Activated B cell treated with CpG ODN at 0.5 μM for 24 hours (primary cell): ENCODE measurements at regions of chr15 and their contacts with region 1.

Region 1: GRCh38 chr15:77959432-77959879 is 118.1 kb downstream of the TBC1D2B start:
- DNase-seq: peak; percentile 69
- ATAC-seq: peak; percentile 99
- H3K4me3 Mint-ChIP-seq: peak overlapping the region; percentile 44
- H3K27ac Mint-ChIP-seq: no peak overlapping the region
- H3K4me1 Mint-ChIP-seq: peaks cover 7% of the 10 kb centered on the region
- H3K27me3 Mint-ChIP-seq: peaks cover 23% of the 10 kb centered on the region
- CTCF ChIP-seq: peak; percentile 93

Region 2: DNA sequence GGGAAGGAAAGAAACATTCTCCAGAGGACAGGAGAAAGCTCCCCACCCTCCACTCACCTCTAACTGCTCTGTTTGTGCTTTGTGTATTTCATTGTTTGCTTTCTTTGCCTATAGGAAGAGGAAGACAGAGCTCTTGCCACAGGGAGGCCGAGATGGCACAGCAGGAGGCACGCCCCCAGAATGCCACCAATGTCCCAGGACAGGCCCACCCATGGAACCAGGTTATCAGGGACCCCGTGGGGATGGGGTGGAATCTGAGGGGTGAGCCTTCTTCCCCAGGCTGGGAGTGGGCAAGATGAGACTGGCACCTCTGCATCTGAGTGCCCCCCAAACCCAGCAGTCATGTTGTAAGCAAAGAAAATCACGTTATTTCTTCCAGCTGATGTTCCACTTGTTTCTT is 37.8 kb before region 1 on chr15:
- CTCF ChIA-PET with region 1: no interaction called
- POLR2A ChIA-PET with region 1: no interaction called
- intact Hi-C with region 1: no loop called
- DNase-seq: no peak
- ATAC-seq: no peak
- H3K4me3 Mint-ChIP-seq: no peak overlapping the region
- H3K27ac Mint-ChIP-seq: no peak overlapping the region
- H3K4me1 Mint-ChIP-seq: no peaks in the 10 kb centered on the region
- H3K27me3 Mint-ChIP-seq: peaks cover 16% of the 10 kb centered on the region
- CTCF ChIP-seq: no peak

Region 3: GRCh38 chr15:78000091-78000926 is 40.9 kb after region 1 on chr15:
- CTCF ChIA-PET with region 1: no interaction called
- POLR2A ChIA-PET with region 1: no interaction called
- intact Hi-C with region 1: loop called (anchors 2 kb)
- DNase-seq: peak; percentile 60
- ATAC-seq: peak; percentile 97
- H3K4me3 Mint-ChIP-seq: no peak overlapping the region
- H3K27ac Mint-ChIP-seq: no peak overlapping the region
- H3K4me1 Mint-ChIP-seq: peaks cover 8% of the 10 kb centered on the region
- H3K27me3 Mint-ChIP-seq: no peaks in the 10 kb centered on the region
- CTCF ChIP-seq: no peak

Region 4: GRCh38 chr15:78241007-78241406 is 281.6 kb after region 1 on chr15:
- CTCF ChIA-PET with region 1: interaction called, 26 read pairs
- POLR2A ChIA-PET with region 1: interaction called, 5 read pairs
- intact Hi-C with region 1: loop called (anchors 2 kb)
- DNase-seq: peak; percentile 77
- ATAC-seq: peak; percentile 94
- H3K4me3 Mint-ChIP-seq: no peak overlapping the region
- H3K27ac Mint-ChIP-seq: no peak overlapping the region
- H3K4me1 Mint-ChIP-seq: peaks cover 2% of the 10 kb centered on the region
- H3K27me3 Mint-ChIP-seq: no peaks in the 10 kb centered on the region
- CTCF ChIP-seq: no peak

Region 5: DNA sequence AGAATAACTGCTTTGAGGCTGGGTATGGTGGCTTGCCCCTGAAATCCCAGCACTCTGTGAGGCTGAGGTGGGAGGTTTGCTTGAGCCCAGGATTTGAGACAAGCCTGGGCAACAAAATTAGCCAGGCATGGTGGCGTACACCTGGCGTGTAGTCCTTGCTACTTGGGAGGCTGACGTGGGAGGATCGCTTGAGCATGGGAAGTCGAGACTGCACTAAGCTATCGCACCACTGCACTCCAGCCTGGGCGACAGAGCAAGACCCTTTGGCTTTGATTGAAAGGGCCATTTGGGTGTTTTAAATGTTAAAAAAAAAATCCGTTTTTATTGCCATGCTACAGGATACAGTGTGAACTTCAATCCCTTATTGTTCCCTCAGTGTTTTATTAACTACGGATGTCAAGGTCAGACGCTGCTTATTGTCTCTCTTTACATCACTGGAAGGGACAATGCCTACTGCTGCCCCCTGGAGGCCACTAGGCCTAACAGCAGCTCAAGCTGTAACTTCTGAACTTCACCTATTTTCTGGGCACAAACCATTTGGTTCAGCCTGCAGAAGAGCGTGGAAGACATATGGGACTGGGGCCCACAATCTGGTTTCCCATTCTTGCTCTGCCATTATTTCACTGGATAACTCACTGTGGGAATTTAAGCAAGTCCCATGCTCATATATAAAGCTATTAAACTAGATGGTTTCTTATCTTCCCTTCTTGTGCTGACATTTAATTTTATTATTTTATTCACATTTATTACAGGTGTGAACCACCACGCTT is 463.3 kb after region 1 on chr15:
- CTCF ChIA-PET with region 1: interaction called, 3 read pairs
- POLR2A ChIA-PET with region 1: no interaction called
- intact Hi-C with region 1: loop called (anchors 1 kb)
- DNase-seq: peak; percentile 35
- ATAC-seq: peak; percentile 91
- H3K4me3 Mint-ChIP-seq: no peak overlapping the region
- H3K27ac Mint-ChIP-seq: no peak overlapping the region
- H3K4me1 Mint-ChIP-seq: no peaks in the 10 kb centered on the region
- H3K27me3 Mint-ChIP-seq: peaks cover 19% of the 10 kb centered on the region
- CTCF ChIP-seq: peak; percentile 86